IMR-90 (cell line): ENCODE measurements at regions of chr10 and their contacts with region 1.

Region 1: GRCh38 chr10:96850825-96851224 is 18.7 kb downstream of the LCOR start:
- DNase-seq: peak; percentile 98
- ATAC-seq: peak; percentile 92
- H3K4me3 ChIP-seq: no peak overlapping the region
- H3K27ac ChIP-seq: no peak overlapping the region
- H3K4me1 ChIP-seq: peaks cover 10% of the 10 kb centered on the region
- H3K27me3 ChIP-seq: no peaks in the 10 kb centered on the region
- CTCF ChIP-seq: no peak
- POLR2A ChIP-seq: no peak
- RAD21 ChIP-seq: no peak

Region 2: GRCh38 chr10:96814264-96814663 is 36.6 kb before region 1 on chr10:
- CTCF ChIA-PET with region 1: no interaction called
- POLR2A ChIA-PET with region 1: no interaction called
- dilution Hi-C with region 1: no loop called
- in situ Hi-C with region 1: no loop called
- intact Hi-C with region 1: no loop called
- DNase-seq: peak; percentile 86
- ATAC-seq: peak; percentile 86
- H3K4me3 ChIP-seq: no peak overlapping the region
- H3K27ac ChIP-seq: no peak overlapping the region
- H3K4me1 ChIP-seq: 0 out of 2 replicates have a peak, but pooled peaks cover 1% of the 10 kb centered on the region
- H3K27me3 ChIP-seq: no peaks in the 10 kb centered on the region
- CTCF ChIP-seq: no peak
- POLR2A ChIP-seq: no peak
- RAD21 ChIP-seq: no peak

Region 3: GRCh38 chr10:96896884-96897589 is 46.2 kb after region 1 on chr10:
- CTCF ChIA-PET with region 1: no interaction called
- POLR2A ChIA-PET with region 1: no interaction called
- dilution Hi-C with region 1: no loop called
- in situ Hi-C with region 1: loop called (anchors 5 kb)
- intact Hi-C with region 1: loop called (anchors 5 kb)
- DNase-seq: no peak
- ATAC-seq: no peak
- H3K4me3 ChIP-seq: no peak overlapping the region
- H3K27ac ChIP-seq: no peak overlapping the region
- H3K4me1 ChIP-seq: no peaks in the 10 kb centered on the region
- H3K27me3 ChIP-seq: no peaks in the 10 kb centered on the region
- CTCF ChIP-seq: no peak
- POLR2A ChIP-seq: no peak
- RAD21 ChIP-seq: no peak

Region 4: GRCh38 chr10:96960872-96961271 is 110.0 kb after region 1 on chr10:
- CTCF ChIA-PET with region 1: no interaction called
- POLR2A ChIA-PET with region 1: no interaction called
- dilution Hi-C with region 1: no loop called
- in situ Hi-C with region 1: no loop called
- intact Hi-C with region 1: loop called (anchors 5 kb)
- DNase-seq: peak; percentile 5
- ATAC-seq: no peak
- H3K4me3 ChIP-seq: no peak overlapping the region
- H3K27ac ChIP-seq: no peak overlapping the region
- H3K4me1 ChIP-seq: peaks cover 8% of the 10 kb centered on the region
- H3K27me3 ChIP-seq: no peaks in the 10 kb centered on the region
- CTCF ChIP-seq: no peak
- POLR2A ChIP-seq: no peak
- RAD21 ChIP-seq: no peak